Right ventricle myocardium inferior (tissue), 1 donor: ENCODE measurements at regions of chr6 and their contacts with region 1.

Region 1: GRCh38 chr6:125858427-125859320 is 67.9 kb downstream of the NCOA7 start:
- DNase-seq: no peak
- ATAC-seq: peak; percentile 84

Region 2: DNA sequence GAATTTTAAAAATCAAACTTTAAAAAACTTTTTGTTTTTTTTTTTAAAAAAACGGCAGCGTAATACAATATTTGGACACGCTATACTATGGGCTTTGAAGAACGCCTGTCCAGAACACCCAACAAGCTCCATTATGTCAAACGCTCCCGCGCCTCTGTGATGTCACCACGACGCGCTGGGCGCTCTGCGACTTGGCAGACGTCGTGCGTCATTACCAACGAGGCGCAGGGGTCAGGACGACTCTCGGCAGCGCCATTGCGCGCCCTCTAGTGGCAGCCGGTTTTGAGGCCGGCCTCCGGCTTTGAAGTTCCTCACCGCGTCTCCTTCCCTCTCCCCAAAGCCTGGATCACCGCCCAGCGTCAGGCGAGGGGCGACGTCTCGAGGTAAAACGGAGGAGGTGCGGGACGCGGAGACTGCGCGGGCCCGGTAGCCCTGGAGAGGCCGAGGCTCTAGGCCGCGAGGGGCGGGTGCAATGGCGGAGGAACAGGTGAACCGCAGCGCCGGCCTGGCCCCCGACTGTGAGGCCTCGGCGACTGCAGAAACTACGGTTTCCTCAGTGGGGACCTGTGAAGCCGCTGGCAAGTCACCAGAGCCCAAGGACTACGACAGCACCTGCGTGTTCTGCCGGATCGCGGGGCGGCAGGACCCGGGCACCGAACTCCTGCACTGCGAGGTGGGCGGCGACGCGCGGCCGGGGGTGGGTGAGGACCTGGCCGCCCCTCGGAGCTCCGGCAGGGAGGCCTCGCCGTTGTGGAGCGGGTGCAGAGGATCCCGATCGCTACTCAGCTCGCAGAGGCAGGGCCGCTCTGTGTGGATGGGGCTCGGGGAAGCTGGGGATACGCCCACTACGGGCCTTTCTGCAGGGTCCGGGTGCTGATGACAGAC is 98.1 kb after region 1 on chr6 and contains the start of gene HINT3:
- intact Hi-C with region 1: loop called (anchors 5 kb)
- DNase-seq: peak; percentile 99
- ATAC-seq: peak; percentile 97
- total RNA-seq, gene HINT3: 34.8 TPM

Region 3: GRCh38 chr6:125974214-125974866 is 115.7 kb after region 1 on chr6:
- intact Hi-C with region 1: loop called (anchors 5 kb)
- DNase-seq: no peak
- ATAC-seq: peak; percentile 60